ENCODE measurements at regions of chr2 and their contacts with region 1.

Region 1: DNA sequence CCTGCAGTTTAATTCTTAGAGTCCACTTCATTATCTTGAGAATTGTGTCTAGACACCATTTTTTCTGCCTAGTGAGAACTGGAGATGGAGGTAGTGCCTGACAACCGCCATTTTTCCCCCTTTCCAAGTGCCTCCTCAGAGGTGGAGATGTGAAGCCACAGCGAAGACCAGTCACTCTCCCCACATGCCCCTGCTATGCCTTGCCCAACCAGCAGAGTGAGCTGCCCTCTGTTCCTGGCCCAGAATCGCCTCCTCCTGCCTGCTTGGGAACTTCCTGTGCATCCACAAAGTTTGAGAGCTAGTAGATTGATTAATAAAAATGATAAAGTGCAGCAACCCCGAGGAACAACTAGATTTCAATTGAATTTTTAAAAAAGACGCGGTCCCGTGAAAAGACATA is 123.3 kb downstream of the CLIP4 start:
- DNase-seq: peak; percentile 26
- ATAC-seq: peak; percentile 96
- H3K4me3 ChIP-seq: no peak overlapping the region
- H3K27ac ChIP-seq: no peak overlapping the region
- H3K4me1 ChIP-seq: no peaks in the 10 kb centered on the region
- H3K27me3 ChIP-seq: peaks cover 57% of the 10 kb centered on the region; the same call in 1 of the 2 replicates
- CTCF ChIP-seq: peak; percentile 58 to 91 (median 85); a peak in 5 of 6 replicates
- POLR2A ChIP-seq: no peak
- RAD21 ChIP-seq: peak; percentile 83

Region 2: DNA sequence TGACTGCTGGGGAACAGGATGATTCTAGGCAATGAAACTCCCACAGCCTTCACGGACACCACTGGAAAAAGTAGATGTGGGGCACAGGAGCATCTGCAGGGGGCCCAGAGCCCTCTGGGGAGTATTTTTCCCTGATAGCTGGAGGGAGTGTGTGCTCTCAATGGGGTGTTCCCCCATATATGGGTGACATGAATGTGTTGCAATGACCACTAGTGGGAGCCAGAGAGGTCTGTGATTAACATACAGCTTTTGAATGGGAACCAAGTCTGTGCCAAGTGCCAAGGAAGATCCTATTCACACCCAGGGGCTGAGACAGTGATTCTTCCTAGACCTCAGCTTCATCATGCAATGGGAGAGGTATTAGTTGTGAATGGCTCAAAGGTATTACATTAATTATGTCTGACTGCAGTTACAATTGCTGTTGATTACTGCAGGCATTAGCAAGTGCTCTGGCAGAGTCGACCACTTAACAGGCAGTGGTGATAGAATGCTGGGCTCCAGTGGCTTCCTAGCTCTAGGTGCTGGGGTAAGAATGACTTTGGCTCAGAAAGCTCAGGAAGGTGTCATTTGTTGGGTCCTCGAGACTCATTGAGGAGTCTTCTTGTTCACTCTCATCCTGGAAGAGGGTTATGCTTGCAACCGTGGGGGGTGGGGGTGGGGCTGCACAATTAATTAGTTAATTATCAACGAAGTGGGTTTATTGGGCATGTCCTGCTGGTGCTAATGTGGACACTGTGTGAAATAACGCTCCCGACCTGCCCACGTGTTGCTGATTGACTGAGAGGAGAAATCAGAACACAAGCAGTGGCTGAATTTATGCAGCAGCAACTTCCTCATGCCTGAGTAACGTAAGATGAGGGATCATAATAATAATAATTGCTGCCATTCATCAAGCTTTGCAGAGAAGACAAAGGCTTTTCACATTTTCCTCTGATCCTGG is 70.9 kb after region 1 on chr2:
- CTCF ChIA-PET with region 1: no interaction called
- POLR2A ChIA-PET with region 1: no interaction called
- RAD21 ChIA-PET with region 1: no interaction called
- intact Hi-C with region 1: loop called (anchors 1 kb)
- DNase-seq: peak; percentile 44
- ATAC-seq: peak; percentile 95
- H3K4me3 ChIP-seq: no peak overlapping the region
- H3K27ac ChIP-seq: no peak overlapping the region
- H3K4me1 ChIP-seq: no peaks in the 10 kb centered on the region
- H3K27me3 ChIP-seq: peaks cover 62% of the 10 kb centered on the region
- CTCF ChIP-seq: peak; percentile 32 to 81 (median 72); a peak in 5 of 6 replicates
- POLR2A ChIP-seq: no peak
- RAD21 ChIP-seq: peak; percentile 53

Region 3: DNA sequence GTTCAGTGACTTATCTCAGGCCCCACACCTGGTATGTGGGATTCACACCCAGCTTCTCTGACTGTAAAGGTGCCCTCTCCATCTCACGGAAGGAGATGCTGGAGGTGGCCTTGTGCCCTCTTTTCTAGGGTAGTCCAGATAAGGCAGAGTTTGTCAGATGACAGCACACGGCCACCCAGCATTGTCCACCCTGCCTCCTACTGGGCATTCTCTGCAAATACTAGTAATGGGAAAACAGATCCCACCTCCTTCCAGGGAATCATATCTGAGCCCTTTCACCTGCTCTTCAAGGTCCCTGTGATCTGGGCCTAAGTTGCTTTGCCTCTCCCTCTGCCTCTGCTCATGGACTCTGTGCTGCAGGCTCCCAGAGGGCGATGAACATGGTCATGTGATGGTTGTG is 91.4 kb after region 1 on chr2:
- CTCF ChIA-PET with region 1: no interaction called
- POLR2A ChIA-PET with region 1: no interaction called
- RAD21 ChIA-PET with region 1: no interaction called
- intact Hi-C with region 1: loop called (anchors 5 kb)
- DNase-seq: no peak
- ATAC-seq: peak; percentile 86
- H3K4me3 ChIP-seq: no peak overlapping the region
- H3K27ac ChIP-seq: no peak overlapping the region
- H3K4me1 ChIP-seq: no peaks in the 10 kb centered on the region
- H3K27me3 ChIP-seq: peaks cover 31% of the 10 kb centered on the region
- CTCF ChIP-seq: peak; percentile 41 to 58 (median 46); a peak in 5 of 6 replicates
- POLR2A ChIP-seq: no peak
- RAD21 ChIP-seq: peak; percentile 48

Region 4: DNA sequence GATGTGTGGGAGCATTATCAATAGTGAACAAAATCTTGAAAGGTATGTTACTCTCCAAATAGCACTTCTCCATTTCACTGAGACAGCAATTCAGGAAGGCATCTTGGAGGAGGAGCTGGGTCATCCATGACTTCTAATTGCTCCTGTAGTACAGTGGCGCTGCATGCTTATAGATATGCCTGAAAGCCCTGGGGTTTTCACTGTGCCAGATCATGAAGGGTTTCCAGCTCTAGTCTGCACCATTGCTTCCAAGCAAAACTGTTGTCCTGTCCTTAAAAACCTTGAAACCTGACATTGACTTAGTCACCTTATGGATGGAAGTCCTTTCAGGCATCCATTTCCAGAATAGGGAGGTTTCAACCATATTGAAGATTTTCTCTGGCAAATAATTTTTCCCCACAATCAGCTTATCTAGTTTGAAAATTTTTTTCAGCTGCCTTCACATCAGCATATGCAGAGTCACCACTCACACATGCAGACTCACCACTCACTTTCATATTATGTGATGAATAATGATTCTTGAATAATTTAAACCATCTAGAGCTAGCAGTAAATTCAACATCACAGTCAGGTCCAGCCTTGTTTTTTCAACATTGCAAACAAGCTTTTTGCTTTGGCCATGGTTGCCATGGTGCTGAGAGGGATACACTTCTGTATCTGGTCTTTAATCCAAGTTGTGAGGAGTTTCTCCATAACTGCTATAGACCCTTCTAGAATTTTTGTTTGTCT is 173.9 kb after region 1 on chr2:
- CTCF ChIA-PET with region 1: no interaction called
- POLR2A ChIA-PET with region 1: no interaction called
- RAD21 ChIA-PET with region 1: no interaction called
- intact Hi-C with region 1: no loop called
- DNase-seq: no peak
- ATAC-seq: no peak
- H3K4me3 ChIP-seq: no peak overlapping the region
- H3K27ac ChIP-seq: no peak overlapping the region
- H3K4me1 ChIP-seq: no peaks in the 10 kb centered on the region
- H3K27me3 ChIP-seq: peaks cover 35% of the 10 kb centered on the region
- CTCF ChIP-seq: no peak
- POLR2A ChIP-seq: no peak
- RAD21 ChIP-seq: no peak